ENCODE measurements at regions of chr10 and their contacts with region 1.

Region 1: GRCh38 chr10:13160934-13161856 is at the start of gene MCM10:
- DNase-seq: peak; percentile 98 to 99
- ATAC-seq: peak; percentile 99 to 100
- H3K4me3 ChIP-seq: peak within 1 kb of the TSS; percentile 71
- H3K27ac ChIP-seq: peak within 1 kb of the TSS; percentile 63 to 82
- H3K4me1 ChIP-seq: peaks cover 12% of the 10 kb centered on the region
- CTCF ChIP-seq: peak; percentile 89
- EP300 ChIP-seq: no peak
- POLR2A ChIP-seq: no peak
- RAD21 ChIP-seq: peak; percentile 69 to 71
- polyA plus RNA-seq, gene MCM10: 18.9 and 24.4 TPM in 2 replicates

Region 2: DNA sequence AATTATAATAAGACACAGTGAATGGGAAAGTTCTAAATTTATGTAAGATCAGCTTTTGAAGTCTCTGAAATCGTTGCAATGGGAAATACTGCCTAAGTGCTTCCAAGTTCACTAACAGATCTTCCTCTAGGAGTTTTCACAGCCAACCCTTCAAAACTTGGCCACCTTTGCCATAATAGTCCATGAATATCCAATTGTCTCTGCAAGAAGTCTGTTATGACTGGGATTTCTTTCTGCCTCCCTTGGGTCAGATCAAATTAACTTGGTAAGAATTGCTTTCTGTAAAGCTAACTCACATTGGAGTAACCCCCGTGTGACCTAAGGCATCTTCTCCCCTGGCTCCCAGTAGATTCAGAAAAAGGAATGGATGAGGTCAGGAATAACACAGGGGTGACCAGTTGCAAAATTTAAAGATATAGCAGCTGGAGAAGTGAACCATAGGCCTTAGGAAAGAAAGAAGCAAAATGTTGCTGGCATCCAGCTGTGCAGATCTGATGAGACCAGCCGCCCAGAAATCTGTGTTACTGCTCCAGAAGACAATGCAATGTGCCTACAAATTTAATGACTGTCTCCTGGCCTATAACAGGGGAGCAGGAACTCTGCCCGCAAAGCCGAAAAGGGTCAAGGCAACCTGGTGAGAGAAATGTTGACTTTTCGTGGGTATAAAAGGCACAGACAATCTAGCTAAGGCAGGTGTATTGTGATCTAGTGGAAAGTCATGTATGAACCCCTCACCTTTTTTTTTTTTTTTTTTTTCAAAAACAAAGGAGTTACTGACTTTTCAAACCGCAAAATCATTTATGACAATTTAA is 68.7 kb before region 1 on chr10:
- CTCF ChIA-PET with region 1: no interaction called
- POLR2A ChIA-PET with region 1: no interaction called
- DNase-seq: no peak
- ATAC-seq: no peak
- H3K4me3 ChIP-seq: no peak overlapping the region
- H3K27ac ChIP-seq: no peak overlapping the region
- H3K4me1 ChIP-seq: peaks cover 20% of the 10 kb centered on the region
- CTCF ChIP-seq: no peak
- EP300 ChIP-seq: no peak
- POLR2A ChIP-seq: no peak
- RAD21 ChIP-seq: no peak

Region 3: GRCh38 chr10:13147161-13147560 is 14.0 kb before region 1 on chr10:
- CTCF ChIA-PET with region 1: interaction called, 10 read pairs
- POLR2A ChIA-PET with region 1: no interaction called
- DNase-seq: no peak
- ATAC-seq: no peak
- H3K4me3 ChIP-seq: no peak overlapping the region
- H3K27ac ChIP-seq: no peak overlapping the region
- H3K4me1 ChIP-seq: 0 out of 3 replicates have a peak, but pooled peaks cover 4% of the 10 kb centered on the region
- CTCF ChIP-seq: no peak
- EP300 ChIP-seq: no peak
- POLR2A ChIP-seq: no peak
- RAD21 ChIP-seq: no peak

Region 4: GRCh38 chr10:13173616-13174015 is 12.4 kb after region 1 on chr10:
- CTCF ChIA-PET with region 1: interaction called, 27 read pairs
- POLR2A ChIA-PET with region 1: no interaction called
- DNase-seq: no peak
- ATAC-seq: no peak
- H3K4me3 ChIP-seq: no peak overlapping the region
- H3K27ac ChIP-seq: no peak overlapping the region
- H3K4me1 ChIP-seq: no peaks in the 10 kb centered on the region
- CTCF ChIP-seq: no peak
- EP300 ChIP-seq: no peak
- POLR2A ChIP-seq: no peak
- RAD21 ChIP-seq: no peak

Region 5: GRCh38 chr10:13180788-13181187 is 19.6 kb after region 1 on chr10:
- CTCF ChIA-PET with region 1: interaction called, 27 read pairs
- POLR2A ChIA-PET with region 1: no interaction called
- DNase-seq: no peak
- ATAC-seq: no peak
- H3K4me3 ChIP-seq: no peak overlapping the region
- H3K27ac ChIP-seq: no peak overlapping the region
- H3K4me1 ChIP-seq: no peaks in the 10 kb centered on the region
- CTCF ChIP-seq: no peak
- EP300 ChIP-seq: no peak
- POLR2A ChIP-seq: no peak
- RAD21 ChIP-seq: no peak

Region 6: GRCh38 chr10:13231808-13232207 is 70.6 kb after region 1 on chr10:
- CTCF ChIA-PET with region 1: no interaction called
- POLR2A ChIA-PET with region 1: no interaction called
- DNase-seq: no peak
- ATAC-seq: no peak
- H3K4me3 ChIP-seq: no peak overlapping the region
- H3K27ac ChIP-seq: no peak overlapping the region
- H3K4me1 ChIP-seq: no peaks in the 10 kb centered on the region
- CTCF ChIP-seq: no peak
- EP300 ChIP-seq: no peak
- POLR2A ChIP-seq: no peak
- RAD21 ChIP-seq: no peak

Region 7: GRCh38 chr10:13284050-13284449 is 122.9 kb after region 1 on chr10:
- CTCF ChIA-PET with region 1: no interaction called
- POLR2A ChIA-PET with region 1: no interaction called
- DNase-seq: no peak
- ATAC-seq: no peak
- H3K4me3 ChIP-seq: no peak overlapping the region
- H3K27ac ChIP-seq: no peak overlapping the region
- H3K4me1 ChIP-seq: no peaks in the 10 kb centered on the region
- CTCF ChIP-seq: no peak
- EP300 ChIP-seq: no peak
- POLR2A ChIP-seq: no peak
- RAD21 ChIP-seq: no peak

Region 8: DNA sequence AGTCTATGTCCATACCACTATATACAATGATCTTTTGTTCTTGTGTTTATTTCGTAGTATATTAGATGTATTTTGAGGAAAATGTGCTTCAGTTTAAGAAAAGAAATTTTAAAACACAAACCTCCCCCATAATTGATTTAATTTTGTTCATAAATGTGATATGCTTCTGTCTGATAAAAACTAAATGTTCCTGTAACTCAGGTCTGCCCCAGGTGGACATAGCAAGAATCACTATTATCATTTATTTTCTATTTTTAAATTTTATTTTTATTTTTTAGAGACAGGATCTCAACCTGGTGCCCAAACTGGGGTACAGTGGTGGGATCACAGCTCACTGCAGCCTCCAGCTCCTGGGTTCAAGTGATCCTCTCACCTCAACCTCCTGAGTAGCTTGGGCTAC is 324.4 kb after region 1 on chr10:
- CTCF ChIA-PET with region 1: no interaction called
- POLR2A ChIA-PET with region 1: no interaction called
- DNase-seq: peak; percentile 5 to 25
- ATAC-seq: 0 out of 6 replicates have a peak, but pooled peaks of 1 of the 2 experiments have one; percentile 38
- H3K4me3 ChIP-seq: no peak overlapping the region
- H3K27ac ChIP-seq: no peak overlapping the region
- H3K4me1 ChIP-seq: no peaks in the 10 kb centered on the region
- CTCF ChIP-seq: no peak; the same call in 2 of the 3 replicates
- EP300 ChIP-seq: no peak
- POLR2A ChIP-seq: no peak
- RAD21 ChIP-seq: no peak